SK-N-SH (cell line): ENCODE measurements at regions of chr2 and their contacts with region 1.

Region 1: GRCh38 chr2:11129598-11130449 is 25.4 kb upstream of the SLC66A3 start:
- DNase-seq: peak; percentile 96
- H3K4me3 ChIP-seq: peak overlapping the region in 1 of 2 experiments; percentile 29; a peak in 2 of 4 replicates
- H3K27ac ChIP-seq: peak overlapping the region in 1 of 2 experiments; percentile 3; a peak in 1 of 4 replicates
- H3K4me1 ChIP-seq: peaks cover 0 to 20% of the 10 kb centered on the region in 2 experiments; a peak in 1 of 4 replicates
- H3K27me3 ChIP-seq: no peaks in the 10 kb centered on the region
- CTCF ChIP-seq: no peak
- EP300 ChIP-seq: no peak
- RAD21 ChIP-seq: peak; percentile 68

Region 2: GRCh38 chr2:10824191-10824590 is 305.6 kb before region 1 on chr2:
- CTCF ChIA-PET with region 1: interaction called, 666 read pairs
- POLR2A ChIA-PET with region 1: no interaction called
- DNase-seq: no peak
- H3K4me3 ChIP-seq: no peak overlapping the region
- H3K27ac ChIP-seq: no peak overlapping the region
- H3K4me1 ChIP-seq: peaks cover 0 to 5% of the 10 kb centered on the region in 2 experiments; a peak in 1 of 4 replicates
- H3K27me3 ChIP-seq: peaks cover 60% of the 10 kb centered on the region; the same call in 1 of the 2 replicates
- CTCF ChIP-seq: no peak
- EP300 ChIP-seq: no peak
- RAD21 ChIP-seq: no peak

Region 3: GRCh38 chr2:11160731-11161455 is 31.1 kb after region 1 on chr2:
- CTCF ChIA-PET with region 1: interaction called, 41 read pairs
- POLR2A ChIA-PET with region 1: no interaction called
- DNase-seq: no peak
- H3K4me3 ChIP-seq: no peak overlapping the region
- H3K27ac ChIP-seq: no peak overlapping the region
- H3K4me1 ChIP-seq: peaks cover 0 to 26% of the 10 kb centered on the region in 2 experiments; a peak in 1 of 4 replicates
- H3K27me3 ChIP-seq: no peaks in the 10 kb centered on the region
- CTCF ChIP-seq: no peak
- EP300 ChIP-seq: no peak
- RAD21 ChIP-seq: no peak

Region 4: DNA sequence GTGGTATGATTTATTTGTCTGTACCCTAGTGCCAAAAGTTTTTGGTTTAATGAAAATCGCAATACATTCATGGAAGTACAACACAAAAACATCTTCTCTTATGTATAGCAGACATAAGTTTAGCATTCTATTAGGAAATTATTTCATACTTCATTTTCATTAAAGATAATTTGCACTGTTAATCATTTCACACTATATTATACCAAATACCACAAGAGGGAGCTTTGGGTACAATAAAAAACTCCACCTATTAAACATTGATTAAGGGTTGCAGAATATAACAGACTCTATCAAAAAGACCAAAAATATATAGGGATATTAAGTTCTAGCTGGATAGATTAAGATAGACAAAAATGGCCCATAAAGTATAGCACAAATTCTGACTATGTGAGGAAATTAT is 104.5 kb after region 1 on chr2:
- CTCF ChIA-PET with region 1: interaction called, 44 read pairs
- POLR2A ChIA-PET with region 1: no interaction called
- DNase-seq: peak; percentile 31
- H3K4me3 ChIP-seq: no peak overlapping the region
- H3K27ac ChIP-seq: no peak overlapping the region
- H3K4me1 ChIP-seq: no peaks in the 10 kb centered on the region
- H3K27me3 ChIP-seq: no peaks in the 10 kb centered on the region
- CTCF ChIP-seq: peak; percentile 82
- EP300 ChIP-seq: no peak
- RAD21 ChIP-seq: peak; percentile 76

Region 5: DNA sequence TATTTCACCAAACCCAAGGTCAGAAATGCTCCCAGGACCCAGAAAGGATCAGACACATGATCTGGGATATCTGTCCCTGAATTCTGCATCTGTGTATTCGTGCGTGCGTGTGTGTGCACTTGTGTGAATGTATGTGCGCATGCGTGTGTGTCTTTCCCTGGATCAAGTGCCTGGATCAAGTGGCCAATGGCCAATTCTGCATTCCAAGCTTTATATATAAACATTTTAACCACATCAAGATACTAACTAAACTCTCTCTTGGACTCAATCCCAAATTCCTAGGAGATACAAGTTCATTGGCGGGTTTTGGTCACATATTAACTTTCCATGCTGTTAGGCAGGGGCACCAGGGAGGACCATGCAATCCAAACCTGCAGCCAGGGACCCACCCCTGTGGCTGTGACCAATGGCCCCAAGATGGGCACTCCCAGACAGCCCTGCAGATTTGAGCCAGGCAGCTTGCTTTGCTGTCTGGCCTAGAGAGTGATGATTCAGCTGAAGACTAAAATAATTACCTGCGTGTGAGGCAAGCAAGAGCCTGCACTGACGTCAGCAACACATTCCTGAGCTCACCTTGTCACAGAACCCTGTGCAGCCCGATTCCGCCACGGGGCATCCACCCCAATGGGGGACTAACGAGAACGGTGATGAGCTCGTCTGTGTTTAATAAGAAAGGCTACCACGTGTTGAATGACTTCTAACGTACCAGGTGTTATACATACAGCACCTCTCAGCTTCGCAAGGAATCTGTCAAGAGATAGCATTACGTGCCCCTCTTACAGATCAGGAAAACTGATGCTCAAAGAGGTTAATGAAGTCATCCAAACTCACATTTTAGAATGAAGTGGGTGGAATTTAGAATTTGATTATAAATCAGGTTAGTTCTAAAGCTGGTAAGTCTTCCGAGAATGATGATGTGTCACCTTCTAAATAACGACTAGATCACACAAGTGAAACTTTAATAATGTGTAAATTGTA is 260.0 kb after region 1 on chr2:
- CTCF ChIA-PET with region 1: interaction called, 25 read pairs
- POLR2A ChIA-PET with region 1: no interaction called
- DNase-seq: no peak
- H3K4me3 ChIP-seq: no peak overlapping the region
- H3K27ac ChIP-seq: no peak overlapping the region
- H3K4me1 ChIP-seq: peaks cover 21 to 27% of the 10 kb centered on the region in 2 experiments; a peak in 3 of 4 replicates
- H3K27me3 ChIP-seq: no peaks in the 10 kb centered on the region
- CTCF ChIP-seq: no peak
- EP300 ChIP-seq: no peak
- RAD21 ChIP-seq: no peak

Region 6: DNA sequence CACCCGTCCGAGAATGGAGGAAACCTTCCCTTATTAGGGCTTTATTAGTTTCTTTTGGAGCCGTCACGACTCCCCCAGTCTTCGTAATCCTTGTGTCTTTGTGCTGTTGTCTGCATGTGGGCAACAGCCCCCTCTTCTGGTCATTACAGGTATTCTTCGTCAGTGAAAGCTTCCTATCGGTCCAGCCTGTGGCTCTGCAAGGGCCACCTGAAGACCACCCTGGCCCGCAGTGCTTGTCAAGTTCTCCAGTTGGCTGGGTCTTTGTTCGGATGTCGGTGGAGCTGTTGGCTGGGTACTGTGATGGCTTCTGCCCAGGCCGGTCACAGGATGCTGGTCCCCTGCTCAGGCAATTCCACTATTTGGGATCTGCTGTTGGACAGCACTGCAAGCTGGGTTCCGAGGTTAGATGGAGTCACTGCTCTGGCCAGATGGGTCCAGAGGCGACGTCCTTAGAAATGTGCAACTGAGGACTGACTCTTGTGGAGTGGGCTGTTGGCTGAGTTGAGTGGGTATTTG is 317.0 kb after region 1 on chr2:
- CTCF ChIA-PET with region 1: interaction called, 169 read pairs
- POLR2A ChIA-PET with region 1: no interaction called
- DNase-seq: peak; percentile 72
- H3K4me3 ChIP-seq: no peak overlapping the region; a peak in 1 of 4 replicates
- H3K27ac ChIP-seq: no peak overlapping the region
- H3K4me1 ChIP-seq: peaks cover 0 to 9% of the 10 kb centered on the region in 2 experiments; a peak in 1 of 4 replicates
- H3K27me3 ChIP-seq: no peaks in the 10 kb centered on the region
- CTCF ChIP-seq: peak; percentile 95
- EP300 ChIP-seq: no peak
- RAD21 ChIP-seq: peak; percentile 85